ENCODE measurements at regions of chr11 and their contacts with region 1.

Region 1: GRCh38 chr11:62841361-62842184 is 2.2 kb upstream of the WDR74 start:
- DNase-seq: peak; percentile 68 to 94 (median 88)
- ATAC-seq: peak; percentile 71
- H3K4me3 ChIP-seq: peak overlapping the region; percentile 73
- H3K4me3 Mint-ChIP-seq: no peak overlapping the region
- H3K27ac ChIP-seq: peak overlapping the region; percentile 99
- H3K27ac Mint-ChIP-seq: no peak overlapping the region
- H3K4me1 ChIP-seq: peaks cover 9 to 22% of the 10 kb centered on the region in 2 donors
- H3K4me1 Mint-ChIP-seq: peaks cover 15 to 31% (median 26%) of the 10 kb centered on the region in 7 donors
- H3K27me3 ChIP-seq: no peaks in the 10 kb centered on the region
- H3K27me3 Mint-ChIP-seq: peaks cover 0 to 6% (median 0%) of the 10 kb centered on the region in 5 donors

Region 2: DNA sequence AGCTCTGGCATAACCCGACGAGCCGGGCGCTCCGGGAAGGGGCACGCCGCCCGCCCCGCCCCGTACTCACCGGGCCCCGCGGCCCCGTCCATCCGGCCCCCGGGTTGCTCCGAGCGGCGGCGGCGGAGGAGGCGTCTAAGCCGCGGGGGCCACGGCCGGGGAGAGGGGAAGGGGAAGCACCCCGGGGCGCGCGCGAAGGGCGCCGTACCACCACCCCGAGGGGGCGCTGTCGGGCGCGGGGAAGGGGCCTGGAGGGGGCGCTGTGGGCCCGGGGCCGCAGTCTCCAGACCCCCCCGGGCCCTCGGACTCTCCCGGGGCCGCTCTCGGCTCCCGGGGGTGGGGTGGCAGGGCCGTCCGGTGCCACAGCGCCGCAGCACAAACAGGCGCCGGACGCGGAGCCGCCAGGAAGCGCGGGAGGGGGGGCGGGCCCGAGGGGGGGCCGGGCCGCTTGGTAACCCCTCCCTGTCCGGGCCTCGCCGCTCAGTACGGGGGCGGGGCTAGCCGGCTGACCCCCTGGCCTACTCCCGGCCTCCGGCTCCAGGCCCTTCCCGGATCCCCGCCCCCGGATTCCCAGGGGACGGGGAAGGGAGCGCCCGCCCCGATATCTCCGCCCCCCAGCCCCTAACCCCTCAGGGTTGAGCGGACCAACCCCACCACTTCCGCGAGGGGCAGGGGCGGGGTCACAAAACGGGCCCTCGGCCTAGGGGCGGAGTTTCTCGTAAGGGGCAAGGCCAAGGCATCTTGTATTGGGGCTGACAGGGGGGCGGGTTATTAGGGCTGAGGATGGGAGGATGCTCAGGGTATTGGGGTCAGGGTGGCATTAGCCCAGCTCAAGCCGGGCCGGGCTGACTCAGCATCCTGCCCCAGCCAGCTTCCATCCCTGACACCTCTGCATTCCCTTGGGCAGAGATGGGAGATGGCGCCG is 228.9 kb before region 1 on chr11 and contains the starts of genes EML3 and ROM1:
- CTCF ChIA-PET with region 1: no interaction called
- POLR2A ChIA-PET with region 1: interaction called, 6 read pairs
- intact Hi-C with region 1: loop called in 1 of 2 experiments (anchors 5 kb)
- DNase-seq: peak; percentile 74 to 96 (median 83)
- ATAC-seq: peak; percentile 90
- H3K4me3 ChIP-seq: peak within 1 kb of the TSS; percentile 99
- H3K4me3 Mint-ChIP-seq: peak within 1 kb of the TSS; percentile 89 to 100 (median 96)
- H3K27ac ChIP-seq: peak within 1 kb of the TSS; percentile 92
- H3K27ac Mint-ChIP-seq: peak within 1 kb of the TSS; percentile 93 to 100 (median 97)
- H3K4me1 ChIP-seq: peaks cover 19 to 32% of the 10 kb centered on the region in 2 donors
- H3K4me1 Mint-ChIP-seq: peaks cover 31 to 56% (median 48%) of the 10 kb centered on the region in 7 donors
- H3K27me3 ChIP-seq: no peaks in the 10 kb centered on the region
- H3K27me3 Mint-ChIP-seq: no peaks in the 10 kb centered on the region
- total RNA-seq, gene EML3: 152 to 209 (median 188) TPM
- total RNA-seq, gene ROM1: 1.2 to 2.4 (median 2.0) TPM

Region 3: GRCh38 chr11:62705880-62706849 is 135.4 kb before region 1 on chr11:
- CTCF ChIA-PET with region 1: no interaction called
- POLR2A ChIA-PET with region 1: interaction called, 57 read pairs
- intact Hi-C with region 1: loop called (anchors 1 kb)
- DNase-seq: peak; percentile 86 to 96 (median 90)
- ATAC-seq: peak; percentile 79
- H3K4me3 ChIP-seq: peak overlapping the region; percentile 74
- H3K4me3 Mint-ChIP-seq: peak overlapping the region; percentile 83 to 97 (median 90)
- H3K27ac ChIP-seq: peak overlapping the region; percentile 73
- H3K27ac Mint-ChIP-seq: peak overlapping the region; percentile 69 to 92 (median 87)
- H3K4me1 ChIP-seq: peaks cover 41 to 46% of the 10 kb centered on the region in 2 donors
- H3K4me1 Mint-ChIP-seq: peaks cover 17 to 49% (median 44%) of the 10 kb centered on the region in 7 donors
- H3K27me3 ChIP-seq: no peaks in the 10 kb centered on the region
- H3K27me3 Mint-ChIP-seq: no peaks in the 10 kb centered on the region

Region 4: DNA sequence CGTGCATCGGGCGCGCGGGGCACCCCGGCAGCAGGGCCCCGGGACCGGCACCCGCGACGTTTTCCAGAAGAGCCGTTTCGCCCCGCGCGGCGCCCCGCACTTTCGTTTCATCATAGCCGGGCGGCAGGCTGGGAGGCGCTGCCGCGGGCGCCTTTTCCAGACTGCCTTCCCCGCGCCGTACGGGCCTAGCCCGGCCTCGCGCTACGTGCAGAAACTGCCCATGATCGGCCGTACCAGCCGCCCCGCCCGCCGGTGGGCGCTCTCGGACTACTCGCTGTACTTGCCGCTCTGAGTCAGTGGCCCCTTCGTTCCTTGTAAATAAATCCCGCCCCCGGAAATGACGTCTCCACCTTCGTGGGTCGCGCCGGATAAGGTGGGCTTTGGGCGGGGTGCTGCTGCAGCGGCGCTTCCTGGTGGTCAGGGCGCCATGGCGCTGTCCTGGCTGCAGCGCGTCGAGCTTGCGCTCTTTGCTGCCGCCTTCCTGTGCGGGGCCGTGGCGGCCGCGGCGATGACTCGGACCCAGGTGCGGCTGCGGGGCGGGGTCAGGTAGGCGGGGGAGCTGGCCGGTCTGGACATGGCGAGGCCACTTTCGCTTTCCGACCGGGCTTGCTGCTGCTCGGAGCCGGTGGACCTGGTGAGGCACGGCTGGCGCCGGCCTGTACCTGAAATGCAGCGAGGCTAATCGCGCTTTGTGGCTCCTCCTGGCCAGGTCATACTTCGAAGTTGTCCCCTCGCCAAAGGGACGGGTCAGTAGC is 54.4 kb before region 1 on chr11 and contains the start of gene TMEM179B:
- CTCF ChIA-PET with region 1: interaction called, 3 read pairs
- POLR2A ChIA-PET with region 1: interaction called, 181 read pairs
- intact Hi-C with region 1: loop called (anchors 1 kb)
- DNase-seq: peak; percentile 87 to 98 (median 95)
- ATAC-seq: peak; percentile 83
- H3K4me3 ChIP-seq: peak within 1 kb of the TSS; percentile 82
- H3K4me3 Mint-ChIP-seq: peak within 1 kb of the TSS; percentile 93 to 97 (median 96)
- H3K27ac ChIP-seq: peak within 1 kb of the TSS; percentile 93
- H3K27ac Mint-ChIP-seq: peak within 1 kb of the TSS; percentile 91 to 99 (median 96)
- H3K4me1 ChIP-seq: peaks cover 32 to 38% of the 10 kb centered on the region in 2 donors
- H3K4me1 Mint-ChIP-seq: peaks cover 22 to 59% (median 42%) of the 10 kb centered on the region in 7 donors
- H3K27me3 ChIP-seq: no peaks in the 10 kb centered on the region
- H3K27me3 Mint-ChIP-seq: no peaks in the 10 kb centered on the region
- total RNA-seq, gene TMEM179B: 23.2 to 72.3 (median 50.9) TPM

Region 5: DNA sequence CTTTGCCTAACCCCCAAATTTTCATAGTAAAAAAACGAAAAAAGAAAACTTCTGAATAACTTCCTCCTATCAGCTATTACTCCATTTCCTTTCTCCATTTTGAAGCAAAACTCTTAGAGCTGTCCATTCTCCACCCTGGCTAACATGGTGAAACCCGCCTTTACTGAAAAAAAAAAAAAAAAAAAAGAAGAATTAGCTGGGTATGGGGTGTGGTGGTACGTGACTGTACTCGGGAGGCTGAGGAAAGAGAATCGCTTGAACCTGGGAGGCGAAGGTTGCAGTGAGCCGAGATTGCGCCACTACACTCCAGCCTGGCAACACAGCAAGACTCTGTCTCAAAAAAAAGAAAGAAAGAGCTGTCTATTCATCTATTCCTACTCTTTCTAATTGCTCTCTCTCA is 25.0 kb before region 1 on chr11:
- CTCF ChIA-PET with region 1: no interaction called
- POLR2A ChIA-PET with region 1: interaction called, 13 read pairs
- intact Hi-C with region 1: no loop called
- DNase-seq: no peak
- ATAC-seq: peak; percentile 77
- H3K4me3 ChIP-seq: no peak overlapping the region
- H3K4me3 Mint-ChIP-seq: no peak overlapping the region
- H3K27ac ChIP-seq: no peak overlapping the region
- H3K27ac Mint-ChIP-seq: peak overlapping the region in 1 of 9 donors; percentile 8
- H3K4me1 ChIP-seq: no peaks in the 10 kb centered on the region
- H3K4me1 Mint-ChIP-seq: peaks cover 0 to 9% (median 0%) of the 10 kb centered on the region in 7 donors
- H3K27me3 ChIP-seq: no peaks in the 10 kb centered on the region
- H3K27me3 Mint-ChIP-seq: no peaks in the 10 kb centered on the region

Region 6: DNA sequence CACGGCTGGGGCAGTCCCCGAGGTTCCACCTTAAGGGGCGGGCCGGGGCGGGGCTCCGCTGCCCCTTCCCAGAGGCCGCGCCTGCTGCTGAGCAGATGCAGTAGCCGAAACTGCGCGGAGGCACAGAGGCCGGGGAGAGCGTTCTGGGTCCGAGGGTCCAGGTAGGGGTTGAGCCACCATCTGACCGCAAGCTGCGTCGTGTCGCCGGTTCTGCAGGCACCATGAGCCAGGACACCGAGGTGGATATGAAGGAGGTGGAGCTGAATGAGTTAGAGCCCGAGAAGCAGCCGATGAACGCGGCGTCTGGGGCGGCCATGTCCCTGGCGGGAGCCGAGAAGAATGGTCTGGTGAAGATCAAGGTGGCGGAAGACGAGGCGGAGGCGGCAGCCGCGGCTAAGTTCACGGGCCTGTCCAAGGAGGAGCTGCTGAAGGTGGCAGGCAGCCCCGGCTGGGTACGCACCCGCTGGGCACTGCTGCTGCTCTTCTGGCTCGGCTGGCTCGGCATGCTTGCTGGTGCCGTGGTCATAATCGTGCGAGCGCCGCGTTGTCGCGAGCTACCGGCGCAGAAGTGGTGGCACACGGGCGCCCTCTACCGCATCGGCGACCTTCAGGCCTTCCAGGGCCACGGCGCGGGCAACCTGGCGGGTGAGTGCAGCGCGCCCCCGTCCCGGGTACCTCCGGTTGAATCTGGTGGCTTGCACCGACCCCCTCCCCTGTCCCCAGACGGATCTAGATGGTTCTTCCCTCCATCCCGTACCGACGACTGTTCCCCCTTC is 39.4 kb after region 1 on chr11 and contains the start of gene SLC3A2:
- CTCF ChIA-PET with region 1: no interaction called
- POLR2A ChIA-PET with region 1: interaction called, 88 read pairs
- intact Hi-C with region 1: loop called (anchors 1 kb)
- DNase-seq: peak; percentile 80 to 90 (median 87)
- ATAC-seq: peak; percentile 88
- H3K4me3 ChIP-seq: peak within 1 kb of the TSS; percentile 97
- H3K4me3 Mint-ChIP-seq: peak within 1 kb of the TSS; percentile 98 to 100 (median 100)
- H3K27ac ChIP-seq: peak within 1 kb of the TSS; percentile 94
- H3K27ac Mint-ChIP-seq: peak within 1 kb of the TSS; percentile 98 to 100 (median 99)
- H3K4me1 ChIP-seq: peaks cover 34 to 35% of the 10 kb centered on the region in 2 donors
- H3K4me1 Mint-ChIP-seq: peaks cover 34 to 60% (median 53%) of the 10 kb centered on the region in 7 donors
- H3K27me3 ChIP-seq: no peaks in the 10 kb centered on the region
- H3K27me3 Mint-ChIP-seq: peaks cover 0 to 4% (median 0%) of the 10 kb centered on the region in 5 donors
- total RNA-seq, gene SLC3A2: 159 to 239 (median 218) TPM

Measured in naive thymus-derived CD4-positive, alpha-beta T cell (primary cell).